CD14-positive monocyte (primary cell): ENCODE measurements at regions of chr6 and their contacts with region 1.

Region 1: DNA sequence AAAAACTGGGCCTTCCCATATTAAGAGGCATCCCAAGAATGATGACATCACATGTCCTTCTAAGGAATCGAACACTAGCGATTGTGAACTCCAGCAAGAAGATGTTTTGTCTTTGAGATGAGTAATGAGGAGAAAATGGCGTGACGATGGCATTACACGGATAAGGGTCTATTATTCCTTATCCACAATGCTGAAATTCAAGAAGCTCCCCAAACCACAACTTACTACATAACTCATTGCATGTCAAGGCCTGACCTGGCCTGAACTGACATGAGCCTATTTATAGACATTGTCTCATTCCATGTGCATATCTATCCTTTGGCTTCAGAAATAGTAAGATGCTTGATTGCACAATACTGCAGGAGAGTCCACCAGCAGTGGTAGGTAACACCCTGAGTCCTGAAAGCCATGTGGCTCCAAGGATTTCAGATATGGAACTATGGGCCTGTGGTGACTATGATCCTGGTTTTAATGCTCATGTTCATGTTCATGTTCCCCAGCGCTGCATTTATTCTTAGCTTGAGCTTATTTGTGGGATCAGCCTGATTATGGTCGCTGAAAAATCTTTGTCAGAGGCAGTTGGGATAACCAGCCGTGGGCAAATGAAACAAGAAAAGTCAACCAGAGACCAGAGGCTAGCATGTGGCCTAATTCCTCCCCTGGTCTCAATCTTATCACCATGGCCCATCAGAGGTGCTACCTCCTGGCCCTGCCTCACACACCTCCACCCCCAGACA is 183.2 kb upstream of the JARID2 start:
- DNase-seq: peak; percentile 92 to 96 (median 94)
- H3K4me3 ChIP-seq: no peak overlapping the region
- H3K4me3 Mint-ChIP-seq: no peak overlapping the region
- H3K27ac ChIP-seq: peak overlapping the region; percentile 76 to 98
- H3K27ac Mint-ChIP-seq: peak overlapping the region; percentile 91 to 99 (median 97)
- H3K4me1 ChIP-seq: peaks cover 65 to 70% of the 10 kb centered on the region in 2 donors
- H3K4me1 Mint-ChIP-seq: peaks cover 60% of the 10 kb centered on the region
- H3K27me3 ChIP-seq: no peaks in the 10 kb centered on the region
- H3K27me3 Mint-ChIP-seq: peaks cover 0 to 9% (median 0%) of the 10 kb centered on the region in 3 donors
- CTCF ChIP-seq: no peak

Region 2: DNA sequence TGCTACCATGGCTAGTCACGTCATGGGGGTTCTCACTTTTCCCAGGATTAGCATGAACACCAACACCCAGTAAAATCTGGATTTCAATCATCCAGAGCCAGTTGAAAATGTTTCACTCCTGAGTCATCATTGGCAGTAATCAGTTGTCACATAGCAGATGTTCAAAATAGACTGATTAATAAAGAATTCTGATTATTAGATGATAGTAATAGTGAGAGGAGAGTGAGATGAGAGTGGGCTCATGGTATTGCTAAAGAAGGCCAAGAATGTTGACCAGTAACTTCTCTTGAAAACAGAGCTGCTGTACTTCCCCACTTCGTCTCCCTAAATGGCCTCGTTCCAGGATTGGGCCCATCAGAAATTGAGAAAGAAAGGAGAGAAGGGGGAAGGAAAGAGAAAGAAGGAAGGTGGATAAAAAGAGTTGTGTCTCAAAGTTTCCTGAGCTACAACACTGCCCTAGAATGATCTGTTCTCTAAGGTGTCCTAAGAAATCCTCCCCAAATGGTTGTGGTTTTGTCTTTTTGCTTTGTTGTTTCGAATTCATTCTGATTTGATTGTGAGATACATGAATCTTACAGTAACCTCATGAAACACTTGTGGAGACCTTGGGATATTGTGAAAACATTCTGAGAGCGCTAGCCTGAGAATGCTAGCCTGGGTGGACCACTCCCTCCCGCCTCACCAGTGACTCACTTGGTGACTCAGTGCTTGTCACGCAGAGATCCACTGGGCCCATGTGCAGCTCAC is 319.0 kb before region 1 on chr6:
- intact Hi-C with region 1: loop called (anchors 5 to 10 kb)
- DNase-seq: peak; percentile 99 to 100 (median 99)
- H3K4me3 ChIP-seq: no peak overlapping the region
- H3K4me3 Mint-ChIP-seq: peak overlapping the region; percentile 4 to 70
- H3K27ac ChIP-seq: peak overlapping the region; percentile 97 to 100
- H3K27ac Mint-ChIP-seq: peak overlapping the region; percentile 98 to 100 (median 100)
- H3K4me1 ChIP-seq: peaks cover 32 to 48% of the 10 kb centered on the region in 2 donors
- H3K4me1 Mint-ChIP-seq: peaks cover 55% of the 10 kb centered on the region
- H3K27me3 ChIP-seq: no peaks in the 10 kb centered on the region
- H3K27me3 Mint-ChIP-seq: peaks cover 0 to 5% (median 0%) of the 10 kb centered on the region in 3 donors
- CTCF ChIP-seq: no peak

Region 3: DNA sequence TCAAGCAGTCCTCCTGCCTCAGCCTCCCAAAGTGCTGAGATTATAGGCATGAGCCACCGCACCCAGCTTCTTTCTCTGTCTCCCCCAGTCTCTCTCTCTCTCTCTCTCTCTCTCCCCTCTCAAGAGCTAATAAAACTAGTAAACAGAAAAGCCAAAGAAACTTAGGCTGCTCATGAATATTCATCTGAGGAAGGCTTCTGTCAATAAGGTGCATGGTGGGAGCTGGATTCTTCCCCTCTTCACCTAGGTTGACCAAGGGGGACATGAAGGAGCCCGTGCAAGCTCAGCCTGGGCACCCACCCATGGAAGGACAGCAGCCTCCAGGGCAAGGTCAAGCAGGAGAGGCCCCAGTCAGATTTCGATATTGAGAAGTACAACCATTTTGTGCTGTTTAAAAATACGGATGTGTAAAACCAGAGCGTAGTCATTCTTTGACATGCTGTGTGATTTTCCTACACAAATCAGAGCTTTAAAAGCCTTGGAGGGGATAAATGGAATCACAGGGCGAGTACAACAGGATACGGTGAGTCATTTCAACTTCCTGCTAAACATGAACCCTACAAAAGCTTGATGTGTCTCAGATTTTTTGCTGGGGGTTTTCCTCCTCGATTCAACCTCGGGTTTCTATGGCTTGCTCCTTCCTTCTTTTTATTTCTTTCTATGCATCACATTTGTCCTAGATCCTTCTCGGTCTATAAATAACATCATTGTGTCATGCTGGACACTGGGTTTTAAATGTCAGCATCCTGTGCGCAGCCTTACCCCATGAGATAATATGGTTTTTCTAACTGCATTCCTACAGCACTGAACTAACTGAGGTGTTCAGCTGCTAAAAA is 185.7 kb before region 1 on chr6:
- intact Hi-C with region 1: loop called in 1 of 2 experiments (anchors 10 kb)
- DNase-seq: peak; percentile 95 to 99 (median 99)
- H3K4me3 ChIP-seq: no peak overlapping the region
- H3K4me3 Mint-ChIP-seq: peak overlapping the region in 1 of 2 donors; percentile 67
- H3K27ac ChIP-seq: peak overlapping the region; percentile 95 to 99
- H3K27ac Mint-ChIP-seq: peak overlapping the region; percentile 99 to 100 (median 100)
- H3K4me1 ChIP-seq: peaks cover 86 to 90% of the 10 kb centered on the region in 2 donors
- H3K4me1 Mint-ChIP-seq: peaks cover 95% of the 10 kb centered on the region
- H3K27me3 ChIP-seq: no peaks in the 10 kb centered on the region
- H3K27me3 Mint-ChIP-seq: peaks cover 0 to 2% (median 0%) of the 10 kb centered on the region in 3 donors
- CTCF ChIP-seq: no peak

Region 4: DNA sequence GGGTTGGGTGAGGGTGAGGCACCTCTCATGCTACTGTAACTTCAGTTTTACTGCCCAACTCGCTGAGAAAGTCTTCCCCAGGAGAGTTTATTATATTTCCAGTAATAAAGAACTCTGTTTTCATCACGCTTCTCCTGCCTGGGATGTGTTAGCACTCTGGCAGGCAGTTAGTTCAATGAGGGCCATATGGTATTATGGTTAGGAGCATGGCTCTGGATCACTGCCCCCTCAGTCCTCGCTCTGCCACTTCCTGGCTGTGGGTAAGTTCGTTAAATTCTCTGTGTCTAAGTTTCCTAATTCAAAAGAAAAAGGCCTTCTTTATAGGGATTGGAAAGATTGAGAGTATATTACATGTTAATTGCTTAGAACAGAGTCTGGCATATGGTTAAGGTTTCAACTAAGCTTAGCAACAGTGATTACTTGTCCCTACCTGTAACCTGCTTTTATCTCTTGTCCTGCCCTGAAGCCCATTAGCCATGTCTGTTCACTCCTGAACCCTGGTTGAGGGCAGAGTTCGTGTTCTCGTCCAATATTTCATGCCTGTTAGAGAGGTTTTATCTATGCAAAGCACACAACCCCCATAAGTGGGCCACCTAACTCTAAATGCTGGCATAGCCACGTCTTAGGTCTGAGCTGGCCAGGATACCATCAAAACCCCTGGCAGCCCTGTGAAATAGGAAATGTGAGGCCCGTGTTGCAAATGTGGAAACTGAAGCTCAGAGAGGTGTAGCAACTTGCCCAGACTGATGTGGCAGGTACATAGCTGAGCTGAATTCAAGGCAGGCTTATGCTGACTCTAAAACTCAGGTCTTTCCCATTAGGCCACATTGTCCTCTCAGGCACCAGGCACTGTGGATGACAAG is 159.3 kb before region 1 on chr6:
- intact Hi-C with region 1: no loop called
- DNase-seq: peak in 1 of 3 donors; percentile 34
- H3K4me3 ChIP-seq: no peak overlapping the region
- H3K4me3 Mint-ChIP-seq: no peak overlapping the region
- H3K27ac ChIP-seq: peak overlapping the region in 1 of 2 donors; percentile 12
- H3K27ac Mint-ChIP-seq: peak overlapping the region in 4 of 7 donors; percentile 27 to 66 (median 38)
- H3K4me1 ChIP-seq: peaks cover 12 to 16% of the 10 kb centered on the region in 2 donors
- H3K4me1 Mint-ChIP-seq: peaks cover 18% of the 10 kb centered on the region
- H3K27me3 ChIP-seq: no peaks in the 10 kb centered on the region
- H3K27me3 Mint-ChIP-seq: no peaks in the 10 kb centered on the region
- CTCF ChIP-seq: no peak

Region 5: DNA sequence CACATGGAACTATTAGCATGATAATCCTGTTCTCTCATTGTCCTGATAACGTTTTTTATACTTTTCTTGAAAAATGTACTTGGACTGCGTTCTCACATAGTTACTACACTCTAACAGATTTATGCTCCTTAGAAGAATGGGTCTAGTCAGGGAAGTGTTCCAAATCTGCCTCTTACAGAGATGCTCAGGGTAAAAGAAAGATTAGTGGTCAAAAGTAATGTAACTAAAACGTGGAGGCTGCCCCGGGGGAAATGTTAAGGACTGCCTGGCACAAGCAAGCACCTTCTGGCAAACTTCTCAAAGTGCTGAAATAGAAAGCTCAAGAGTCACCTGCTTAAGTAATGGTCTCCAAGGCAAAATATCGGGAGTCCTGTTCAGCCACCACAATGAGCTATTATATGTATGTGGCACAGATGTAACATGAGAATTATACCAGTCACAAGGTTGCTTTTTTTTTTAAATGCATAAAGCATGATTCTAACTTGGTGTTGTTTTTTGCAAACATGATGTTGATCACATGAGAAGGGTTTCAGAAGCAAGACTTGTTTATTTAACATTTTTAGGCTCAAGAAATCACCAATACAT is 61.3 kb before region 1 on chr6:
- intact Hi-C with region 1: no loop called
- DNase-seq: no peak
- H3K4me3 ChIP-seq: no peak overlapping the region
- H3K4me3 Mint-ChIP-seq: no peak overlapping the region
- H3K27ac ChIP-seq: no peak overlapping the region
- H3K27ac Mint-ChIP-seq: no peak overlapping the region
- H3K4me1 ChIP-seq: no peaks in the 10 kb centered on the region
- H3K4me1 Mint-ChIP-seq: peaks cover 4% of the 10 kb centered on the region
- H3K27me3 ChIP-seq: no peaks in the 10 kb centered on the region
- H3K27me3 Mint-ChIP-seq: peaks cover 0 to 2% (median 0%) of the 10 kb centered on the region in 3 donors
- CTCF ChIP-seq: no peak

Region 6: DNA sequence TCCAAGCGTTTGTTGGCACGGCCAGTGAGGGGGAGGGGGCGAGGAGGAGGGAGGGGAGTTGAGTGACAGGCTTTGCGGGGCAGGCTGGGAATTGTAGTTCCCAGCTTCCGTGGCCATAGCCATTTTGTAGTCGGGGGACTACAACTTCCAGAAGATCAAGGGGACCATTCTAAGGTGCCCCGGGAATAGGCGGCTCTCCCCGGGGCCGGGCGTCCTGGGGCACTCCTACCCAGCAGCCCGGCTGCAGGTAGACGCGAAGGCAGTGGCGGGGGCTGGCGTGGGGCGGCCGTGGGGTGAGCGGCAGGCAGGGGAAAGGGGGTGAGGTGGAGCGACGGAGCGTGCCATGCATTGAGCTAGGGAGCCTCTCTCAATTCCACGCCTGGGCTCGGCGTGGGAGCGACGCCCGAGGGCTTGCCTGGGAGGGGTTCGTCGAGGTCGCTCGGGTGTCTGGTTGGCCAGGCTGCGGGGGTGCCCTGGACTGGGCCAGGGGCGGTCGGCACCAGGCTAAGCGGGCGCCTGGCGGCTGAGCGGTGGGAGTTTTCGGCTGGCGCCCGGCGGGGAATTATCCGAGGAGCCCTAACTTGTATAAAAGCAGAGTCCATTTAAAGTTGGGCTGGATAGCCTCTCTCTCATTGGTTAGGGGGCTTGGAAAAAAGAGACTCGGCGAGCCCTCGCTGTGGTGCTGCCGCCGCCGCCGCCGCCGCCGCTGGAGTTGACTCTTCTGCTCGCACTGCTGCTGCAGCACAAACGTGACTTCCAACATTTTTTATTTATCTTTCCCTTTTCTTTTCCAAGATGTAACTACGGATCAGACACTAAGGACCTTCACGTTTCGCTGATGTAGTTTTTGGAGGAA is 182.9 kb after region 1 on chr6 and contains the start of gene JARID2:
- intact Hi-C with region 1: loop called (anchors 5 kb)
- DNase-seq: peak; percentile 97 to 98 (median 98)
- H3K4me3 ChIP-seq: peak within 1 kb of the TSS; percentile 90 to 100 (median 98)
- H3K4me3 Mint-ChIP-seq: peak within 1 kb of the TSS; percentile 99 to 100
- H3K27ac ChIP-seq: peak within 1 kb of the TSS; percentile 71 to 90
- H3K27ac Mint-ChIP-seq: peak within 1 kb of the TSS; percentile 96 to 99 (median 98)
- H3K4me1 ChIP-seq: peaks cover 33 to 44% of the 10 kb centered on the region in 2 donors
- H3K4me1 Mint-ChIP-seq: peaks cover 25% of the 10 kb centered on the region
- H3K27me3 ChIP-seq: no peaks in the 10 kb centered on the region
- H3K27me3 Mint-ChIP-seq: no peaks in the 10 kb centered on the region
- CTCF ChIP-seq: no peak
- polyA plus RNA-seq, gene JARID2: 6.8 to 17.5 (median 12.5) TPM